ENCODE measurements at regions of chr16 and their contacts with region 1.

Region 1: GRCh38 chr16:81567987-81568748 is 123.6 kb downstream of the CMIP start:
- DNase-seq: peak in 4 of 6 donors; percentile 29 to 70 (median 58)
- ATAC-seq: peak; percentile 79 to 86 (median 83)
- H3K4me3 ChIP-seq: no peak overlapping the region
- H3K27ac ChIP-seq: no peak overlapping the region
- H3K4me1 ChIP-seq: peaks cover 0 to 4% (median 0%) of the 10 kb centered on the region in 3 donors
- H3K27me3 ChIP-seq: no peaks in the 10 kb centered on the region
- CTCF ChIP-seq: no peak

Region 2: GRCh38 chr16:81198635-81199034 is 369.5 kb before region 1 on chr16:
- intact Hi-C with region 1: no loop called
- DNase-seq: no peak
- ATAC-seq: no peak
- H3K4me3 ChIP-seq: no peak overlapping the region
- H3K27ac ChIP-seq: no peak overlapping the region
- H3K4me1 ChIP-seq: no peaks in the 10 kb centered on the region
- H3K27me3 ChIP-seq: no peaks in the 10 kb centered on the region
- CTCF ChIP-seq: no peak

Region 3: GRCh38 chr16:81521151-81521626 is 47.0 kb before region 1 on chr16:
- intact Hi-C with region 1: no loop called
- DNase-seq: peak in 1 of 6 donors; percentile 35
- ATAC-seq: peak in 3 of 4 donors; percentile 9 to 28 (median 17)
- H3K4me3 ChIP-seq: no peak overlapping the region
- H3K27ac ChIP-seq: no peak overlapping the region
- H3K4me1 ChIP-seq: peaks cover 0 to 6% (median 0%) of the 10 kb centered on the region in 3 donors
- H3K27me3 ChIP-seq: no peaks in the 10 kb centered on the region
- CTCF ChIP-seq: no peak

Region 4: GRCh38 chr16:81616321-81617055 is 48.3 kb after region 1 on chr16:
- intact Hi-C with region 1: loop called in 1 of 3 experiments (anchors 10 kb)
- DNase-seq: peak in 1 of 6 donors; percentile 52
- ATAC-seq: peak in 3 of 4 donors; percentile 43 to 66 (median 61)
- H3K4me3 ChIP-seq: no peak overlapping the region
- H3K27ac ChIP-seq: peak overlapping the region in 1 of 4 donors; percentile 22
- H3K4me1 ChIP-seq: no peaks in the 10 kb centered on the region
- H3K27me3 ChIP-seq: no peaks in the 10 kb centered on the region
- CTCF ChIP-seq: no peak

Measured in pancreas (tissue), 10 donors.